Calu3 (cell line): ENCODE measurements at regions of chr7 and their contacts with region 1.

Region 1: GRCh38 chr7:110442381-110442837 is 648.5 kb upstream of the LRRN3 start:
- DNase-seq: peak; percentile 67
- H3K4me3 Mint-ChIP-seq: no peak overlapping the region
- H3K27ac Mint-ChIP-seq: no peak overlapping the region
- H3K4me1 Mint-ChIP-seq: no peaks in the 10 kb centered on the region
- H3K27me3 Mint-ChIP-seq: no peaks in the 10 kb centered on the region
- CTCF ChIP-seq: peak; percentile 54

Region 2: GRCh38 chr7:110003827-110004226 is 438.6 kb before region 1 on chr7:
- CTCF ChIA-PET with region 1: no interaction called
- intact Hi-C with region 1: loop called (anchors 10 kb)
- DNase-seq: no peak
- H3K4me3 Mint-ChIP-seq: no peak overlapping the region
- H3K27ac Mint-ChIP-seq: no peak overlapping the region
- H3K4me1 Mint-ChIP-seq: no peaks in the 10 kb centered on the region
- H3K27me3 Mint-ChIP-seq: no peaks in the 10 kb centered on the region
- CTCF ChIP-seq: no peak

Region 3: GRCh38 chr7:110090110-110090769 is 352.2 kb before region 1 on chr7:
- CTCF ChIA-PET with region 1: no interaction called
- intact Hi-C with region 1: loop called (anchors 2 kb)
- DNase-seq: peak; percentile 7
- H3K4me3 Mint-ChIP-seq: no peak overlapping the region
- H3K27ac Mint-ChIP-seq: no peak overlapping the region
- H3K4me1 Mint-ChIP-seq: no peaks in the 10 kb centered on the region
- H3K27me3 Mint-ChIP-seq: no peaks in the 10 kb centered on the region
- CTCF ChIP-seq: no peak